ENCODE measurements at regions of chr12 and their contacts with region 1.

Region 1: GRCh38 chr12:54398995-54399793 is 14.7 kb upstream of the ZNF385A start:
- DNase-seq: peak; percentile 82 to 92 (median 85)
- ATAC-seq: peak; percentile 76 to 86 (median 84)
- H3K4me3 ChIP-seq: no peak overlapping the region
- H3K27ac ChIP-seq: peak overlapping the region in 1 of 12 donors; percentile 73
- H3K4me1 ChIP-seq: peaks cover 0 to 20% (median 3%) of the 10 kb centered on the region in 12 donors
- H3K27me3 ChIP-seq: no peaks in the 10 kb centered on the region
- CTCF ChIP-seq: peak; percentile 97 to 99 (median 99)
- POLR2A ChIP-seq: no peak

Region 2: DNA sequence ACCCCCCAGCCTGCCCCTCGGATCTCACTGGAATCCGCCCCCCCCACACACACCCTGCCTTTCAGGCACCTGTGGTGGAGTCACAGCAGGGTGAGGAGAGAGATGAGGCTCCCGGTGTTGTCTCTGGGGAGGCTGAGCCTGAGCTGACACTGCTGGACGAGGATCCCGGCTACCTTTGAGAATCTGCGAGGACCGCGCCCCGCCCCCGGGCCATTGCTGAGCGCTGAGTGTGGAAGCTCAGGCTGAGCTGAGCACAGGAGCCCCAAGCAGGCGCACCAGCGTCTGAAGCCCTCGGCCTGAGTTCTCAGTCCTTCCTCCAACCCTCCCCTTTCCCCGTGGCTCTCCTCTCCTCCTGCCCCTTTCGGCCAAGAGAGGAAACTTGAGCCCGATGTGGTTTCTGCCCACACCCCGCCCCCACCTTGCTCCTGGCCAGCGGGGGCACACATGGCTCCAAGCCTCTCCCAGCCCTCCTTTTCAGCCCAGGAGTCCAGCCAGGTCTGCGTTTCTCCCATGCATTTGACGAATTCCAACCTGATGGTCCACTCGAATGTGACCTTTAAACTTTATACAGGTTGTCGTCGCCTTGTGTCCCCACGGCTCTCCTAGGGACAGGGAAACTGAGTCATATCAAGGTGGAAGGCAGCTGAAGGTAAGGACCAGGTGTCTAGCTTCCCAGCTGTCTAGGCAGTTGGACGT is 98.3 kb before region 1 on chr12 and contains the start of gene NFE2:
- intact Hi-C with region 1: no loop called
- DNase-seq: peak in 4 of 5 donors; percentile 39 to 72 (median 56)
- ATAC-seq: peak; percentile 50 to 68 (median 62)
- H3K4me3 ChIP-seq: peak within 1 kb of the TSS in 8 of 12 donors; percentile 22 to 49 (median 34)
- H3K27ac ChIP-seq: peak within 1 kb of the TSS in 1 of 12 donors; percentile 27
- H3K4me1 ChIP-seq: peaks cover 0 to 53% (median 5%) of the 10 kb centered on the region in 12 donors
- H3K27me3 ChIP-seq: peaks cover 0 to 35% (median 9%) of the 10 kb centered on the region in 9 donors
- CTCF ChIP-seq: no peak
- POLR2A ChIP-seq: no peak
- total RNA-seq, gene NFE2: 0.21 to 1.7 (median 0.63) TPM in 7 of 9 donors, not detected in the others

Region 3: GRCh38 chr12:54324617-54325441 is 74.4 kb before region 1 on chr12 and contains the start of gene COPZ1:
- intact Hi-C with region 1: no loop called
- DNase-seq: peak; percentile 94 to 95 (median 95)
- ATAC-seq: peak; percentile 98 to 99 (median 98)
- H3K4me3 ChIP-seq: peak within 1 kb of the TSS; percentile 51 to 85 (median 75)
- H3K27ac ChIP-seq: peak within 1 kb of the TSS; percentile 50 to 88 (median 83)
- H3K4me1 ChIP-seq: peaks cover 0 to 47% (median 30%) of the 10 kb centered on the region in 12 donors
- H3K27me3 ChIP-seq: no peaks in the 10 kb centered on the region
- CTCF ChIP-seq: peak; percentile 58 to 88 (median 82)
- POLR2A ChIP-seq: peak in 1 of 2 donors; percentile 50
- total RNA-seq, gene COPZ1: 112 to 146 (median 125) TPM

Region 4: DNA sequence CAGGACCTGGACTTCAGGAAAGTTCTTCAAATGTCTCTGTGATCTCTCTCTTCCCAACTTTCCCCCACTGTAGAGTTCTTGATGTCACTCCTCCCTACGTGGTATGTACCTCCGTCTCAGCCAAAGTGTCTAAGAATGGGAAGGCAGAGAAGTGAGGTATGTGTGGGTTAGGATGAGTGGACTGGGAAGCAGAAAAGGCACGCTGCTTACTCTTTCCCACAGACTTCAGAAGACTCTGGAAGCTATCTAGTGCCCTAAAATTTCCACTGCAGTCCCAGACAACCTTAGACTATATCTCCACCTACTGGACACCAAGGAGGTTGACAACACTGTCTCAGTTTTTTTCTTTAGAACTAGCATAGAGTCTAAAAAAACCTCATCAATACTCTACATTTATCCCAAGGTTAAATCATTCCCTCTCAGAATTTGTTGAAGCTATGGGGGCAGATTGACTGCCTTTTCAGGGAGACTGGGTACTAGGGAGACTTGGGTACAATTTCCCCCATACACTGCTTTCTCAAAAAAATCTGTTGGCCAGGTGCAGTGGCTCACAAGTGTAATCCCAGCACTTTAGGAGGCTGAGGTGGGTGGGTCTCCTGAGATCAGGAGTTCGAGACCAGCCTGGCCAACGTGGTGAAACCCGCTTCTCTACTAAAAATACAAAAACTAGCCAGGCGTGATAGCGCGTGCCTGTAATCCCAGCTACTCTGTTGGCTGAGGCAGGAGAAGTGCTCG is 40.5 kb after region 1 on chr12:
- intact Hi-C with region 1: loop called (anchors 1 to 2 kb)
- DNase-seq: no peak
- ATAC-seq: peak; percentile 81 to 92 (median 92)
- H3K4me3 ChIP-seq: no peak overlapping the region
- H3K27ac ChIP-seq: peak overlapping the region in 3 of 12 donors; percentile 13 to 66 (median 24)
- H3K4me1 ChIP-seq: peaks cover 0 to 13% (median 4%) of the 10 kb centered on the region in 12 donors
- H3K27me3 ChIP-seq: no peaks in the 10 kb centered on the region
- CTCF ChIP-seq: peak; percentile 71 to 91 (median 87)
- POLR2A ChIP-seq: no peak

Region 5: DNA sequence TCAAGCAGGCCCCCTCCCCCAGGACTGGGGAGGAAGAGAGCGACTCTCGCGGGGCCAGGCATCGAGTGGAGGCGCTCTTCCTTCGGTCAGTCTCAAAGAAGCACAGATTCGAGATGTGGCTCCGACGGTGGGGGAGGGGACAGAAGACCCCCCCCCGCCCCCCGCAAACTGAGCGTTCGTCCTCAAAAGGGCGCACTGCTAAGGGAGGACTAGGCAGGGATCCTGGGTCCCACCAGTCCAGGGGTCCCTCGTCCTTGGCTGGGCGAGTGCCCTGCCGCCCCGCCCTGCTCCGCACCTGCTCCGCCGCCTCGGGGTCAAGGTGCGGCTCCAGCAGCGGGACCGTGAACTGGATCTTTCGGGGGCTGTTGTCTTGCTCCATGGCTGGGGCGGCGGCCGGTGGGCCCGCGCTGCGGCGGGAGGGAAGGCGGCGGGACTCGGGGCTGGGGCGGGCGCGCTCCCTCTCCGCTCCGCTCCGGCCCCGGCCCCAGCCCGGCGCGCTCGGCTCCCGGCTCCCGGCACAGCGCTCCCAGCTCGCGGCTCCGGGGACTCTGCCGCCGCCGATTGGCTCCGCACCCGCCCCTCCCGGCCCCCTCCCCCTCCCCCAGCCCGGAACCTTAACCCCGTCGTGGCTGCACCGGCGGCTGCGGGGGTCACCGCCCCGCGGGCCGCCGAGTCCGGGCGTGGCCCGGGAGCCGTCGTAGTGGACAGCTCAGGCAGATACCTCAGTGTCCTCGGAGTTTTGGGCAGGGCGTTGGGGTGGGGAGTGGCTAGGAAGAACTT is 189.1 kb after region 1 on chr12 and contains the start of gene PPP1R1A:
- intact Hi-C with region 1: no loop called
- DNase-seq: peak; percentile 20 to 69 (median 40)
- ATAC-seq: peak in 3 of 4 donors; percentile 44 to 72 (median 65)
- H3K4me3 ChIP-seq: peak within 1 kb of the TSS; percentile 45 to 77 (median 60)
- H3K27ac ChIP-seq: peak within 1 kb of the TSS in 6 of 12 donors; percentile 18 to 77 (median 46)
- H3K4me1 ChIP-seq: peaks cover 0 to 39% (median 12%) of the 10 kb centered on the region in 12 donors
- H3K27me3 ChIP-seq: peaks cover 0 to 41% (median 15%) of the 10 kb centered on the region in 9 donors
- CTCF ChIP-seq: no peak
- POLR2A ChIP-seq: peak in 1 of 2 donors; percentile 52
- total RNA-seq, gene PPP1R1A: 46.7 to 162 (median 60.9) TPM

Measured in heart left ventricle (tissue), 16 donors.